IMR-90 (cell line): ENCODE measurements at regions of chr3 and their contacts with region 1.

Region 1: GRCh38 chr3:112519424-112520001 is 20.2 kb upstream of the BTLA start:
- DNase-seq: peak; percentile 78
- ATAC-seq: peak; percentile 98
- H3K4me3 ChIP-seq: no peak overlapping the region
- H3K27ac ChIP-seq: no peak overlapping the region
- H3K4me1 ChIP-seq: no peaks in the 10 kb centered on the region
- H3K27me3 ChIP-seq: no peaks in the 10 kb centered on the region
- CTCF ChIP-seq: peak; percentile 84
- POLR2A ChIP-seq: no peak
- RAD21 ChIP-seq: peak; percentile 84

Region 2: GRCh38 chr3:112097378-112097777 is 422.1 kb before region 1 on chr3:
- CTCF ChIA-PET with region 1: no interaction called
- POLR2A ChIA-PET with region 1: no interaction called
- dilution Hi-C with region 1: no loop called
- in situ Hi-C with region 1: no loop called
- intact Hi-C with region 1: no loop called
- DNase-seq: peak; percentile 100
- ATAC-seq: peak; percentile 79
- H3K4me3 ChIP-seq: no peak overlapping the region
- H3K27ac ChIP-seq: no peak overlapping the region
- H3K4me1 ChIP-seq: peaks cover 14% of the 10 kb centered on the region
- H3K27me3 ChIP-seq: no peaks in the 10 kb centered on the region
- CTCF ChIP-seq: no peak
- POLR2A ChIP-seq: no peak
- RAD21 ChIP-seq: no peak

Region 3: DNA sequence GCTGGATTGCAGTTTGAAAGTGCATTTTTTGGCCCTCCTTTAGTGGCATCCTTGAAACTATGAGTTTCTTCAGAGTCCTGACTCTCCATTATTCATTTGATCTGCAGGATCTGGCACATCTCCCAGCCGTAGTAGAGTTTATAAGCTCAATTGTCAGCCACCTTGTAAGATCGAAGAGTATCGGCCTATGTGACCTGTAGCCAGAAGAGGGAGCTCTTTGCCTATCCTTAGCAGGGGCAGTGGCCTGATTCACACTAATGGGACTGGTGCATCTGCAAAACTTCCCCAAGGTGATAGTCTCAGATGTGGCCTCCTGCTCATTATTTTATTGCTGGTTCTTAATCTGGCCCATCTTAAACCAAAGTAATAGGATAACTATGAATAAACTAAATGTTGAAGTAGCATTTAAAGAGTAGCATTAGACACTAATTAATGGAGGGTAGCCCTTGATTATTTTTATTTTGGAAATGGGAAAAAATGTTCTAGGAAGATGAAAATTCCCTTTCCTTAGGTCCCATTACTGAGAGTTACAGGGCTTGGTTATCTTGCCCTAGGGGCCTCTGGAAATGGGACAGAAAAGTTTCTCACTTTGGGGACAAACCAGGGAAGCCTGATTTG is 407.6 kb before region 1 on chr3:
- CTCF ChIA-PET with region 1: no interaction called
- POLR2A ChIA-PET with region 1: no interaction called
- dilution Hi-C with region 1: no loop called
- in situ Hi-C with region 1: no loop called
- intact Hi-C with region 1: loop called (anchors 2 kb)
- DNase-seq: peak; percentile 77
- ATAC-seq: peak; percentile 96
- H3K4me3 ChIP-seq: no peak overlapping the region
- H3K27ac ChIP-seq: no peak overlapping the region
- H3K4me1 ChIP-seq: no peaks in the 10 kb centered on the region
- H3K27me3 ChIP-seq: no peaks in the 10 kb centered on the region
- CTCF ChIP-seq: peak; percentile 72
- POLR2A ChIP-seq: no peak
- RAD21 ChIP-seq: peak; percentile 78

Region 4: DNA sequence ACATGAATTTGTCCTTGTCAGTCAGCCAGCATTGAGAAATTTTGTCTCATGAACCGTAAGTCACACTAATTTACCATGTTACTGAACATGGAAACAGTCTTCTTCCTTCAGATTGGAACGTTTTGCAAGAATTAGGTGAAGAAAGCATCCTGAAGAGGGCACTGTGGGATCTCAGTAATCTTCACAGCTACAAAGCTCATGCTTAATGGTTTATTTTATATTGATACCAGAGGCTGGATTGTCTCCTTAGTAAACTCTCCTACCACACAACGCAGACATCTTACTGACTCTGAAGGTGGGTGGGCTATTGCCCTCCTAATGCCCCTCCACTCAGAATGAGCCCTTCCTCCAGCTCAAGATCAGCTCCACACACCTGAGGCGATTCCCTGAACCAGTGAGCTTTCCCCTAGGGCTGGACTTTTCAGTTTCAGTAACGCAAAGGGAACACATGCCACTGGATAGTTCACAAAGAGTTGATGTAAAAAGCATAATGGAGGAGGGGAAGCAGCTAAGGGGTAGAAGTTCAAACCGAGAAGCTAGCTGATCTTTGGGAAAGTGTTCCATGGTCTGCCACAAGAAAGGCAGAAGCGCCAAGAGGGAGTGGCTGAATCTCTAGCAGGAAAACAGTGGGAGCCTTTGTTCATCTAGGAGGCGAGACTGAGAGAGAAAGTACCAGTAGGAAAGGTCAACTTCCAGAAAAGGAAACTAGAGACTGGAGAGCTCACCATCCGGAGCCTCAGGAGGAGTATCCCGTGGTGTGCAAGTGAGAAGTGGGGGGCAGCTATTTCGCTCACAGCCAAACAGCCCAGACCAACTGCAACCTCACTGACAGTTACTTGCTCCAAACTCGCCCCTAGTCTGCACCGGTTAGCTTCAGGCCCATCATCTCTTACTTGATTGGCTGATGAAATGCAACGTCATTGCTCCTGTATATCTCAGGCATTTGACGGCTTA is 225.9 kb before region 1 on chr3 and contains the start of gene SLC9C1:
- CTCF ChIA-PET with region 1: interaction called, 10 read pairs
- POLR2A ChIA-PET with region 1: no interaction called
- dilution Hi-C with region 1: no loop called
- in situ Hi-C with region 1: loop called (anchors 10 kb)
- intact Hi-C with region 1: loop called (anchors 1 kb)
- DNase-seq: peak; percentile 74
- ATAC-seq: peak; percentile 85
- H3K4me3 ChIP-seq: peak within 1 kb of the TSS; percentile 36
- H3K27ac ChIP-seq: peak within 1 kb of the TSS; percentile 35; the same call in 1 of the 2 replicates
- H3K4me1 ChIP-seq: no peaks in the 10 kb centered on the region
- H3K27me3 ChIP-seq: no peaks in the 10 kb centered on the region
- CTCF ChIP-seq: peak; percentile 83
- POLR2A ChIP-seq: no peak
- RAD21 ChIP-seq: peak; percentile 77
- total RNA-seq, gene SLC9C1: not detected in 2 replicates

Region 5: GRCh38 chr3:112327371-112327951 is 192.1 kb before region 1 on chr3:
- CTCF ChIA-PET with region 1: interaction called, 4 read pairs
- POLR2A ChIA-PET with region 1: no interaction called
- dilution Hi-C with region 1: loop called (anchors 25 kb)
- in situ Hi-C with region 1: loop called (anchors 5 kb)
- intact Hi-C with region 1: loop called (anchors 1 kb)
- DNase-seq: peak; percentile 68
- ATAC-seq: peak; percentile 91
- H3K4me3 ChIP-seq: no peak overlapping the region
- H3K27ac ChIP-seq: no peak overlapping the region
- H3K4me1 ChIP-seq: no peaks in the 10 kb centered on the region
- H3K27me3 ChIP-seq: peaks cover 5% of the 10 kb centered on the region; the same call in 1 of the 2 replicates
- CTCF ChIP-seq: peak; percentile 91
- POLR2A ChIP-seq: no peak
- RAD21 ChIP-seq: peak; percentile 91

Region 6: GRCh38 chr3:112437146-112438022 is 82.1 kb before region 1 on chr3:
- CTCF ChIA-PET with region 1: no interaction called
- POLR2A ChIA-PET with region 1: no interaction called
- dilution Hi-C with region 1: no loop called
- in situ Hi-C with region 1: no loop called
- intact Hi-C with region 1: loop called (anchors 5 kb)
- DNase-seq: peak; percentile 58
- ATAC-seq: peak; percentile 67
- H3K4me3 ChIP-seq: no peak overlapping the region
- H3K27ac ChIP-seq: no peak overlapping the region
- H3K4me1 ChIP-seq: no peaks in the 10 kb centered on the region
- H3K27me3 ChIP-seq: no peaks in the 10 kb centered on the region; the same call in 1 of the 2 replicates
- CTCF ChIP-seq: peak; percentile 56
- POLR2A ChIP-seq: no peak
- RAD21 ChIP-seq: peak; percentile 71

Region 7: DNA sequence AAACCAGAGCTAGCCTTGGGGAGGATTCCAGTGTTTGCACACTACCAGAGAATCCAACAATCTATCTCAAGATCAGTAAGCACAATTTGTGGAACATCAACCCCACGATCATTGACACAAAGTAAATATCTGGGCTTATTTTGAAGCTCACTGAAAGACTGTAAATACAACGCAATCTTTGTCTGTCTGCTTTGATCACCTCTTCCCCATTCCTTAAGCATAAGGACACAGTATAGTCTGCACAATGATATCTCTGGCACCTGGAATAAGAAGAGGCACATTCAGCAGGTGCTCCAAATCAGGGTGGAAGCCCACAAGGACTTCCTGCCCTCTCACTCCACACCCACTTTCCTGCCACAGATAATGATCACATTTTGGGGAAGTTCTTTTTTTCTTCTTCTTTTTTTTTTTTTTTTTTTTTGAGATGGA is 46.3 kb before region 1 on chr3:
- CTCF ChIA-PET with region 1: no interaction called
- POLR2A ChIA-PET with region 1: no interaction called
- dilution Hi-C with region 1: no loop called
- in situ Hi-C with region 1: no loop called
- intact Hi-C with region 1: no loop called
- DNase-seq: no peak
- ATAC-seq: no peak
- H3K4me3 ChIP-seq: no peak overlapping the region
- H3K27ac ChIP-seq: no peak overlapping the region
- H3K4me1 ChIP-seq: no peaks in the 10 kb centered on the region
- H3K27me3 ChIP-seq: peaks cover 6% of the 10 kb centered on the region
- CTCF ChIP-seq: no peak
- POLR2A ChIP-seq: no peak
- RAD21 ChIP-seq: no peak